Activated CD8-positive, alpha-beta T cell treated with anti-CD3 and anti-CD28 coated beads for 36 hours (primary cell): ENCODE measurements at regions of chr4 and their contacts with region 1.

Region 1: DNA sequence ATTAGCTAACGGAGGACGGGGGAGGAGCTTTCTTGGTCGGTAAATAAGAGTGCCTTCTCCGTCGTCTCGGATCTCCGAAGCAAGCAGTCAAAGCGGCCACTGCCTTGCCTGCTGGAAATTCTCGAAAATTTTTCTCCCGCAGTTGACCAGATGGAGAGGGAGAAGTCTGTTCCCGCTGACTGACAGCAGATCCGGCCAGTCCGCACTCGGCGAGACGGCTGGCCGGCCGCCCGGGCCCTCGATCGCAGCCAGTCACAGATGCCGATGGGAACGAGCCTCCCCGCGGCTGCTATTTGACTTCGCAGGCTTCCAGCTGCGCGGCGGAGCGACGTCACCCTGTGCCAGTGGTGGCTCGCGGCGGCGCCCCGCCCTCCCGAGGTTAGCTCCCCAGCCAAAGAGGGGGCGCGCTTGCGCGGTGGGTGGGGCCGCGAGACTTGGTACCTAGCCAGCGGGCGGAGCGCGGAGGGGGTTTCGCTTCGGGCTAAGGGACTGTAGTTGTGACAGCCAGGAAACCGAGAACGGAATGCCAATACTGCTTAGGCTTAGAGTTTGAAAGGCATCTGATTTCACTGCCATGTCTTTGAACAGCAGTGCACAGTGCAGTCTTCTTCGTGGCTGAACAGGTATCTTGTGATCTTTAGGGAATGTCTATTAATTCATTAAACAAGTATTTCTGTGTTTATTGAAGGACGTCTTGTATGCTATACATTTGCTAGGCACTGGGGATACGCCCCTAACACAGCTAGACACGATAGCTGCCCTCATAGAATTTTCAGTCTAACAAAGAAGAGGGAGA is at the start of gene PPM1K:
- DNase-seq: peak; percentile 99
- ATAC-seq: peak; percentile 89
- H3K4me3 Mint-ChIP-seq: peak within 1 kb of the TSS; percentile 92
- H3K27ac Mint-ChIP-seq: peak within 1 kb of the TSS; percentile 100
- H3K4me1 Mint-ChIP-seq: peaks cover 33% of the 10 kb centered on the region
- H3K27me3 Mint-ChIP-seq: no peaks in the 10 kb centered on the region
- CTCF ChIP-seq: no peak
- total RNA-seq, gene PPM1K: 46.1 to 57.5 TPM

Region 2: GRCh38 chr4:88119951-88120350 is 164.7 kb before region 1 on chr4:
- CTCF ChIA-PET with region 1: no interaction called
- POLR2A ChIA-PET with region 1: no interaction called
- intact Hi-C with region 1: no loop called
- DNase-seq: no peak
- ATAC-seq: no peak
- H3K4me3 Mint-ChIP-seq: no peak overlapping the region
- H3K27ac Mint-ChIP-seq: no peak overlapping the region
- H3K4me1 Mint-ChIP-seq: no peaks in the 10 kb centered on the region
- H3K27me3 Mint-ChIP-seq: peaks cover 3% of the 10 kb centered on the region
- CTCF ChIP-seq: no peak

Region 3: DNA sequence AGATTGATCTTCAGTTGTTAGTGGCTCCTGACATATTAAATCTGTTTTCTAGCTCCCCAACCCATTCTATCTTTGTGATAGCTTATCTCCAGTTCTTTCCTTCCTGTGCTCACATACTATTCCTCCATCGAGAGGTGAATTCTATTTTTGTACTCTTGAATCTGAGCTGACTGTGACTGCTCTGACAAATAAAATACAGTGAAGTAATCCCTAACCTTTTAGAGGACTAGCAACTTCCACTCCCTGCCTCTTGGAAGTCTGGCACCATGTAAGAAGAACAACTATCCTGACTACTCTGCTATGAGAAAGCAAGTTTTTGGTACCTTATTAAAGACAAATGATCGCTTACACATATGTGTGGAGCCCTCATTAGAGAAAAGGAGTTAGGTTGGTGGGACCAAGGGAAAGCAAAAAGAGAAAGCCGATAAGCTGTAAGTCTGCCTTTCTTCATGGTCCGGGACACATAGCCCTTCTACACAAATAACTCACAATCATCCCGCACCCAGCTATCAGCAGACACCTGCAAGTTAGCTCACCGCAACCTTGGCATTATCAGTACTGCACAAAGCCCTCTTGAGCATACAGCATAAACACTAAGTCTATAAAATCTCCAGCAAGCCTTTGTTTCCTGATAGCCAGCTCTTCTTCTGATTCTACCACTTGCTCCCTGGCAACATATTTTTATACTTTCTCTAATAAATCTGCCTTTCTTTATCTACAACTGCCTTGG is 13.3 kb after region 1 on chr4:
- CTCF ChIA-PET with region 1: interaction called, 8 read pairs
- POLR2A ChIA-PET with region 1: interaction called, 13 read pairs
- intact Hi-C with region 1: no loop called
- DNase-seq: no peak
- ATAC-seq: no peak
- H3K4me3 Mint-ChIP-seq: no peak overlapping the region
- H3K27ac Mint-ChIP-seq: no peak overlapping the region
- H3K4me1 Mint-ChIP-seq: no peaks in the 10 kb centered on the region
- H3K27me3 Mint-ChIP-seq: no peaks in the 10 kb centered on the region
- CTCF ChIP-seq: no peak

Region 4: GRCh38 chr4:88378691-88379559 is 94.3 kb after region 1 on chr4 and contains the start of gene HERC6:
- CTCF ChIA-PET with region 1: interaction called, 3 read pairs
- POLR2A ChIA-PET with region 1: no interaction called
- intact Hi-C with region 1: loop called (anchors 2 kb)
- DNase-seq: peak; percentile 89
- ATAC-seq: peak; percentile 58
- H3K4me3 Mint-ChIP-seq: peak within 1 kb of the TSS; percentile 78
- H3K27ac Mint-ChIP-seq: peak within 1 kb of the TSS; percentile 72
- H3K4me1 Mint-ChIP-seq: peaks cover 34% of the 10 kb centered on the region
- H3K27me3 Mint-ChIP-seq: no peaks in the 10 kb centered on the region
- CTCF ChIP-seq: peak; percentile 68
- total RNA-seq, gene HERC6: 3.0 to 4.0 TPM

Region 5: DNA sequence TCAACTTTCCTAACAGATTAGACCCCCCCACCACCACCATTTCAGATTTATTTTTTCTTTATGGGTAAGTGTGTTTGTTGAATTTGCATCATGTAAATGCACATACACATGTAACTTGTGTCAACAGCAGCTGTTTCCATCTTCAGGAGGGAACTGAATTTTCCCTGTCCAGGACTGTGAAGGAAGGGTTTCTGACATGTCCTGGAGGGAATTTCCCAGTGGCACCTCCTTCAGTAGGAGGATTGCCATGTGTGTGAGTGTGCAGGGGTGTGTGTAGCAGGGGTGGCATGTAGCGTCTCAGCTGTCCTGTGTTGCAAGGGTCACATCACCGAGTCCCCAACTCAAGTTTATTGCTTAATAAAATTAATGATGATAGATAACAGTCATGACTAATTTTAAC is 113.7 kb after region 1 on chr4:
- CTCF ChIA-PET with region 1: no interaction called
- POLR2A ChIA-PET with region 1: no interaction called
- intact Hi-C with region 1: no loop called
- DNase-seq: no peak
- ATAC-seq: no peak
- H3K4me3 Mint-ChIP-seq: no peak overlapping the region
- H3K27ac Mint-ChIP-seq: no peak overlapping the region
- H3K4me1 Mint-ChIP-seq: no peaks in the 10 kb centered on the region
- H3K27me3 Mint-ChIP-seq: no peaks in the 10 kb centered on the region
- CTCF ChIP-seq: no peak

Region 6: GRCh38 chr4:88456757-88457306 is 172.2 kb after region 1 on chr4 and contains the start of gene HERC5:
- CTCF ChIA-PET with region 1: interaction called, 3 read pairs
- POLR2A ChIA-PET with region 1: interaction called, 11 read pairs
- intact Hi-C with region 1: loop called (anchors 10 kb)
- DNase-seq: peak; percentile 93
- ATAC-seq: peak; percentile 95
- H3K4me3 Mint-ChIP-seq: peak within 1 kb of the TSS; percentile 97
- H3K27ac Mint-ChIP-seq: peak within 1 kb of the TSS; percentile 99
- H3K4me1 Mint-ChIP-seq: peaks cover 12% of the 10 kb centered on the region
- H3K27me3 Mint-ChIP-seq: peaks cover 5% of the 10 kb centered on the region
- CTCF ChIP-seq: no peak
- total RNA-seq, gene HERC5: 10.2 to 10.5 TPM

Region 7: GRCh38 chr4:88697588-88698329 is 413.1 kb after region 1 on chr4 and contains the start of gene NAP1L5:
- CTCF ChIA-PET with region 1: no interaction called
- POLR2A ChIA-PET with region 1: no interaction called
- intact Hi-C with region 1: no loop called
- DNase-seq: peak; percentile 79
- ATAC-seq: peak; percentile 87
- H3K4me3 Mint-ChIP-seq: peak within 1 kb of the TSS; percentile 80
- H3K27ac Mint-ChIP-seq: peak within 1 kb of the TSS; percentile 73
- H3K4me1 Mint-ChIP-seq: peaks cover 10% of the 10 kb centered on the region
- H3K27me3 Mint-ChIP-seq: no peaks in the 10 kb centered on the region
- CTCF ChIP-seq: no peak
- total RNA-seq, gene NAP1L5: 5.4 to 5.8 TPM